Activated CD4-positive, alpha-beta T cell treated with anti-CD3 and anti-CD28 coated beads, Interleukin-2, amount 10 ng/mL, durations not matched to agents 24 days and 14 days (primary cell): ENCODE measurements at regions of chr1 and their contacts with region 1.

Region 1: GRCh38 chr1:231421993-231422764 is at the start of gene EGLN1:
- DNase-seq: peak; percentile 94
- H3K4me3 Mint-ChIP-seq: peak within 1 kb of the TSS; percentile 98
- H3K27ac Mint-ChIP-seq: peak within 1 kb of the TSS; percentile 95
- H3K4me1 Mint-ChIP-seq: peaks cover 47% of the 10 kb centered on the region
- H3K27me3 Mint-ChIP-seq: peaks cover 25% of the 10 kb centered on the region
- total RNA-seq, gene EGLN1: 21.4 and 23.9 TPM in 2 replicates

Region 2: DNA sequence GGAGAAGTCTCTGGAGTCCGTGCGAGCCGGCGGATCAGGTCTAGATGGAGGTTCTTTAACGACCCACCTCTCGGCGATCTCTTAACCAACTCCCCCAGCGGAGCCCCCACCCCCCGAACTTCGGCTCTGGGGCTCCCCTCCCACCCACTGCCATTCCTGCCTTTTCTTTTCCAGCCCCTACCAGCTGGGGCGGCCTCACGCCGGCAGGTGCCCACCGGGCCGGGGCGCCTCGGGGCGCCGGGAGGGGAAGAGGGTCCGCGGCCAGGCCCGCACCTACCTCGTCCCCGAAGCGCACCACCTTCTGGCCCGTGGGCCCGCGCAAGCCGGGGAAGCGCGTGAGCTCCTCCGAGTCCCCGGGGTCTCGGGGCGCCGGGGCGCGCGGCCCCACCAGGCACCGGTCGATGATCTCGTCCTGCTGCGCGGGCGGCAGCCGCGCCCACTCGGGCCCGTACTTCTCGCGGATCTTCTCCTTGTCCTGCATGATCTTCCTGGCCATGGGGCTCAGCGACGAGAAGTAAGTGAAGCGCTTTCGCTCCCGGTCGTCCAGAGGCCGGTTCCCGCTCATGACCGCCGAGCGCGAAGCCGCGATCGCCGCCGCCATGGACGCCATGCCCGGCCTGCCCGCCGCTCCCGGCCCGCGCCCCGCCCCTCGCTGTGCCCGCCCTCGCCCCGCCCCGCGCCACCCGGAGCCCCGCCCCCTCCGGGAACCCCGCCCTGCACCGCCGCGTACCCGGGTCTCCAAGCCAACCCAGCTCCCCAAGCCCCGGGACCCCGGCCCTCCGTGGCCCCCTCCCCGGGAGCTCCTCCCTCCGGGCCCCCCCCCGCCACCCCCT is 554.1 kb before region 1 on chr1 and contains the start of gene C1orf198:
- intact Hi-C with region 1: loop called (anchors 5 kb)
- DNase-seq: peak; percentile 91
- H3K4me3 Mint-ChIP-seq: peak within 1 kb of the TSS; percentile 89
- H3K27ac Mint-ChIP-seq: peak within 1 kb of the TSS; percentile 84
- H3K4me1 Mint-ChIP-seq: peaks cover 31% of the 10 kb centered on the region
- H3K27me3 Mint-ChIP-seq: peaks cover 35% of the 10 kb centered on the region
- total RNA-seq, gene C1orf198: 12.4 and 13.7 TPM in 2 replicates

Region 3: DNA sequence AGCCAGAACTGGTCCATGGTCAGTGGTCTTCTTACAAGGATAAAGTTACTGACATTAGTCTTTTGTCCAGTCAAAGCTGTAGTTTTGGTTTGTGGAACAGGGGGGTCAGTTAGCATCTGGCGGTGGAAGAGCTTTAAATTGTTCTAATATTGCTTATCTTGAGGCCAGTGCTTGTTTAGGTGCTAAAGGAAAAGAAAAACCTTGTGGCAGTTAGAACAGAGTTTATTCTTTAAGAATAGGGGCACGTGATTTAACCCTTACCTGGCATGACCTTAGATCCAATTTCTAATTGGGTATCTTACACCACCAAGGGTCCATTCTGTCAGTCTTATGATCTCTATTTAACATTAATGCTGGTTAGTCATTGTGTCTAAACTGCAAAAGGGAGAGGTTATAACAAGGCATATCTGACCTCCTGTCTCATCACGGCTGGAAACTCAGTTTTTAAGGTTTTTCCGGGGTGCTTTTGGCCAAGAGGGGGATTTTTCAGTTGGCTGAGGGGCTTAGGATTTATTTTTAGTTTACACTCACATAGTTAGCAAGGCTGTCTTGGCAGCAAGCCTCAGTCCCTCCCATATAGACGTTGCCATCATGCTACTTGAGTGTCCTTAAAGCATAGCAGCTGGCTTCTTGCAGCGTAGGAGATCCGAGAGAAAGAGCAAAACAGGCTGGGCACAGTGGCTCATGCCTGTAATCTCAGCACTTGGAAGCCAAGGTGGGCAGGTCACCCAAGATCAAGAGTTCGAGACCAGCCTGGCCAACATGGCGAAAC is 322.0 kb before region 1 on chr1:
- intact Hi-C with region 1: no loop called
- DNase-seq: no peak
- H3K4me3 Mint-ChIP-seq: no peak overlapping the region
- H3K27ac Mint-ChIP-seq: no peak overlapping the region
- H3K4me1 Mint-ChIP-seq: no peaks in the 10 kb centered on the region
- H3K27me3 Mint-ChIP-seq: peaks cover 12% of the 10 kb centered on the region

Region 4: DNA sequence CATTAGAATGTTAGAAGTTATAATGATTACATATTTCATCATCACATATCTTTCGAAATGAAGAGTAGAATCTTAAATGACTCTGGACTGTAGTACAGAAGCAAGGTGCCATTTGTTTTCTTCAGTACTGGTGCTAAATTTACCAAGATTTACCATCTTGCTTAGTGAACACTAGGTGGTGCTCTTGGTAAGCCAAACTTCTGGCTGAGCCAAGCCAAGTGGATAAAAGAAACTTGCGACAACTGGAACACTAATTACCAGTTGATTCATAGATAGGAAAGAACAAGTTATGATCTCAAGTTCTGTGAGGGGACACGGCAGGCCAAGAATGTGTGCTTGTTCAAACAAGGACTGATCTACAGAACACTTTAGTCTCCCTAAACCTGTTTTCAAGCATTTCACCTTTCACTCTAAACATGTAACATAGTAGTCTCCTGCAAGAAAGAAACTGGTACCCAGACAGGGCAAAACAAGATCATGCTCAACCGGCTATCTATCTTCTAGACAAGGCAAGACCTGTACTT is 64.3 kb before region 1 on chr1:
- intact Hi-C with region 1: loop called (anchors 5 kb)
- DNase-seq: peak; percentile 80
- H3K4me3 Mint-ChIP-seq: no peak overlapping the region
- H3K27ac Mint-ChIP-seq: no peak overlapping the region
- H3K4me1 Mint-ChIP-seq: peaks cover 12% of the 10 kb centered on the region
- H3K27me3 Mint-ChIP-seq: no peaks in the 10 kb centered on the region

Region 5: GRCh38 chr1:231383159-231383860 is 38.9 kb before region 1 on chr1:
- intact Hi-C with region 1: no loop called
- DNase-seq: no peak
- H3K4me3 Mint-ChIP-seq: no peak overlapping the region
- H3K27ac Mint-ChIP-seq: no peak overlapping the region
- H3K4me1 Mint-ChIP-seq: peaks cover 22% of the 10 kb centered on the region
- H3K27me3 Mint-ChIP-seq: no peaks in the 10 kb centered on the region

Region 6: GRCh38 chr1:231460614-231461013 is 38.4 kb after region 1 on chr1:
- intact Hi-C with region 1: loop called (anchors 2 kb)
- DNase-seq: peak; percentile 92
- H3K4me3 Mint-ChIP-seq: no peak overlapping the region
- H3K27ac Mint-ChIP-seq: peak overlapping the region; percentile 66
- H3K4me1 Mint-ChIP-seq: peaks cover 35% of the 10 kb centered on the region
- H3K27me3 Mint-ChIP-seq: peaks cover 69% of the 10 kb centered on the region

Region 7: DNA sequence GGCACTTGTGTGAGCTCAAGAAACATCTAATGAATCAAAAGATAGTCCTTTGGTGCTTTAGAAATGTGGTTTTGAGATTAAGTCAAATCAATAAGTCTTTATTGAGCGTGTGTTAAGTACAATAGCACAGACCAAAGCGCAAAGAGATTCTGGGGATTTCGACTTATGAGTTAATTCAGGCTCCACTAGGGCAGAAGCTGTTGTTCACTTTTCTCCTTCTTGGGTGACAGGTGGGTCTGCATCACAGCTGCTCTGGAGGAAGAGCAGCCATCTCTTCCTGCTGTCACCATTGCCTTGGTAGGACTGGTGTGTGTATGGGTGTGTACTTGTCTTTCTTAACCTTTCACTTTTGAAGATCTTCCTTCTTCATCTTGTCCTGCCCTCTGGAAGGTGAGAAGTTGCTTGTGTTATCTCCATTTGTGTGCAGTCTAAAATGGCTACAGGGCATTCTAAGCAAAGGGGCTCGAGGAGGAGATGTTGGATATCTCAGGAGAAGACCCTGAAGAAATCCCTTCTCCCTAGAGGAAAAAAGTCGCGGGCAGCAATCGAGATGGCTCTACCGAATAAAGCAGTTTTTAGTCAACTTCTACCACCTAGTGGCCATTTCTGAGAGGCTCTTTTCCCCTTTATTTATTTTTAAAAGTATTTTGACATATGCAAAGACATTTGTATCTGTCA is 181.6 kb after region 1 on chr1:
- intact Hi-C with region 1: loop called (anchors 5 kb)
- DNase-seq: peak; percentile 84
- H3K4me3 Mint-ChIP-seq: peak overlapping the region; percentile 89
- H3K27ac Mint-ChIP-seq: peak overlapping the region; percentile 65
- H3K4me1 Mint-ChIP-seq: peaks cover 12% of the 10 kb centered on the region
- H3K27me3 Mint-ChIP-seq: peaks cover 10% of the 10 kb centered on the region